ENCODE measurements at regions of chr15 and their contacts with region 1.

Region 1: GRCh38 chr15:74615508-74616365 is at the start of gene CLK3:
- DNase-seq: peak; percentile 95
- H3K4me3 ChIP-seq: peak within 1 kb of the TSS; percentile 89 to 93 (median 91)
- H3K27ac ChIP-seq: peak within 1 kb of the TSS; percentile 86
- H3K4me1 ChIP-seq: peaks cover 36% of the 10 kb centered on the region
- H3K27me3 ChIP-seq: no peaks in the 10 kb centered on the region
- CTCF ChIP-seq: no peak
- total RNA-seq, gene CLK3: 52.7 to 58.7 TPM

Region 2: DNA sequence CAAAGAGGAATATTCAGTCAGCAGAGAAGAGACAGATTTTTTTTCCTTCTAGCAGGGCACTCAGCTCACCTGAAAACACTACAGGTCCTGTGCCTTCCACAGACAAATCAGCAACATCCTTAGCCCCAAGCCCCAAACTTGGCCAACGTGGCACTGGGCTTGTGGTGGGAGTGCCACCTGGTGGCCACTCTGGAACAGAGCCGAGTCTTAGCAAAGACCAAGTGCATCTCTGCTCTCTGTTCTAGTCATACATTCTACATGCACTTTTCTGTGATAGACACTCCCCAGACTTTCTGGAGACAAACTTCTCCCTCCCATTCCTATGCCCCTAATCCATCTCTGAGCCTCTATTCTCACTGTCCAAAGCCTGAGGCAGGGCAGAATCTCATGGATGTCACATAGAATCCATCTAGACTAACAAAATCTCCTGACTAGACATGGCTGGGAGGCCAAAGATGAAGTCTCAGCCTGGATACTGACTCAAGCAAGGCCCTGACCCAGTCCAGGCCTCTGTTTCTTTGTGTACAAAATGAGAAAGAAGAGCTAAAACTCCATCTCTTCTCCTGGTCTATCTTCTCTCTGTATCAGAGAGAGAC is 176.9 kb before region 1 on chr15:
- CTCF ChIA-PET with region 1: interaction called, 3 read pairs
- dilution Hi-C with region 1: no loop called
- in situ Hi-C with region 1: no loop called
- intact Hi-C with region 1: loop called (anchors 2 kb)
- DNase-seq: peak; percentile 73
- H3K4me3 ChIP-seq: no peak overlapping the region
- H3K27ac ChIP-seq: no peak overlapping the region
- H3K4me1 ChIP-seq: peaks cover 4% of the 10 kb centered on the region
- H3K27me3 ChIP-seq: no peaks in the 10 kb centered on the region
- CTCF ChIP-seq: peak; percentile 97 to 98

Region 3: GRCh38 chr15:74460871-74461846 is 154.6 kb before region 1 on chr15 and contains the start of gene UBL7:
- CTCF ChIA-PET with region 1: no interaction called
- dilution Hi-C with region 1: no loop called
- in situ Hi-C with region 1: no loop called
- intact Hi-C with region 1: loop called (anchors 1 kb)
- DNase-seq: peak; percentile 97
- H3K4me3 ChIP-seq: peak within 1 kb of the TSS; percentile 63 to 96 (median 94)
- H3K27ac ChIP-seq: peak within 1 kb of the TSS; percentile 82
- H3K4me1 ChIP-seq: peaks cover 13% of the 10 kb centered on the region
- H3K27me3 ChIP-seq: no peaks in the 10 kb centered on the region
- CTCF ChIP-seq: peak in 1 of 2 donors; percentile 39
- total RNA-seq, gene UBL7: 36.4 to 41.7 TPM

Region 4: DNA sequence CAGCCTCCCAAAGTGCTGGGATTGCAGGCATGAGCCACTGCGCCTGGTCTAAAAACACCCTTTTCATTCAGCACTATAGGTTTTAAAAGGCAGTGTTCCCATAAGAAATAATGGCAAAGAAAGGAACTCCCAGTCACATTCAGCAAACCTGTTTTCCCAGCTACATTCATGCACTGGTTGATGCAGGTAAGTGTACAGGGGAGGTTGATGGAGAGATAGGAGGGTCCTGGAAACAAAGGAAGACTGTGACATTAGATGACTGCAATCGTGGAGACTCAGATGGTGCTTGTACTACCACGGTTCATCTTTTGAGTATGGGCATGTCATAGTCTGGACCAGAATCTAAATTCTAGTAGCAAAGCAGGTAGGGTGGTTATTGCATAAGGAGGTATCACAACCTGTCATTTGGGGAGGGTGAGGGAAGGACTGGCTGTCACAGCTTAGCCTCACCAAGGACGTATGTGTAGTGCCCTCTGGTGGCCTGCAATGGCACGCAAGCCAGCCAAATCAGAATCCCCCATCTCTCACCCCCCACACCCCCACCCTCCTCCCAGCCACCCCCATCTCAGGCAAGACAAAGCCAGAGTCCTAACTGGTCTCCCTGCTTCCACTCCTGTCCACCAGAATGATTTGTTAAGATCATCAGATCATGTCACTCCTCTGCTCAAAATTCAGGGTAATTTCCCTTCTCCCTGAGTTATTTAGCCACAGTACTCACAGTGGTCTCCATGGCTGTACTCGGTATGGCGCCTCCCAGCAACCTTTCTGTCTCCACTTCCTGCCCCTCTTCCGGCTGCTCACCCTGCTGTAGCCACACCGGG is 126.0 kb before region 1 on chr15:
- CTCF ChIA-PET with region 1: no interaction called
- dilution Hi-C with region 1: no loop called
- in situ Hi-C with region 1: no loop called
- intact Hi-C with region 1: loop called (anchors 1 kb)
- DNase-seq: peak; percentile 20
- H3K4me3 ChIP-seq: no peak overlapping the region
- H3K27ac ChIP-seq: no peak overlapping the region
- H3K4me1 ChIP-seq: no peaks in the 10 kb centered on the region
- H3K27me3 ChIP-seq: no peaks in the 10 kb centered on the region
- CTCF ChIP-seq: peak; percentile 50 to 72

Region 5: DNA sequence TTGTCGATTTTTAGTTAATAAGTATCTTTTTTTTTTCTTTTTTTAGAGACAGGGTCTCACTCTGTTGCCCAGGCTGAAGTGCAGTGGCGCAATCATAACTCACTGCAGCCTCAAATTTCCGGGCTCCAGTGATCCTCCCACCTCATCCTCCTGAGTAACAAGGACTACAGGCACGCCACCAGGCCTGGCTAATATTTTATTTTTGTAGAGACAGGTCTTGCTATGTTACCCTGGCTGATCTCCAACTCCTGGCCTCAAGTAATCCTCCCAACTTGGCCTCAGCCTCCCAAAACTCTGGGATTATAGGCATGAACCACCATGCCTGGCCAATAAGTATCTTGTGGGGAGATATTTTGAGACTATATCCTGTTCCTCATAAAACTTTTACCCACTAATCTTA is 104.2 kb before region 1 on chr15:
- CTCF ChIA-PET with region 1: no interaction called
- dilution Hi-C with region 1: no loop called
- in situ Hi-C with region 1: no loop called
- intact Hi-C with region 1: no loop called
- DNase-seq: no peak
- H3K4me3 ChIP-seq: no peak overlapping the region
- H3K27ac ChIP-seq: no peak overlapping the region
- H3K4me1 ChIP-seq: no peaks in the 10 kb centered on the region
- H3K27me3 ChIP-seq: no peaks in the 10 kb centered on the region
- CTCF ChIP-seq: no peak

Region 6: GRCh38 chr15:74540761-74541493 is 74.8 kb before region 1 on chr15 and contains the start of gene ARID3B:
- CTCF ChIA-PET with region 1: interaction called, 24 read pairs
- dilution Hi-C with region 1: no loop called
- in situ Hi-C with region 1: loop called in 1 of 2 experiments (anchors 5 kb)
- intact Hi-C with region 1: loop called (anchors 1 kb)
- DNase-seq: peak; percentile 96
- H3K4me3 ChIP-seq: peak within 1 kb of the TSS; percentile 86 to 95 (median 95)
- H3K27ac ChIP-seq: peak within 1 kb of the TSS; percentile 90
- H3K4me1 ChIP-seq: peaks cover 39% of the 10 kb centered on the region
- H3K27me3 ChIP-seq: no peaks in the 10 kb centered on the region
- CTCF ChIP-seq: no peak
- total RNA-seq, gene ARID3B: 7.0 to 12.8 TPM

Region 7: GRCh38 chr15:74565381-74566085 is 50.2 kb before region 1 on chr15:
- CTCF ChIA-PET with region 1: interaction called, 11 read pairs
- dilution Hi-C with region 1: no loop called
- in situ Hi-C with region 1: no loop called
- intact Hi-C with region 1: no loop called
- DNase-seq: no peak
- H3K4me3 ChIP-seq: no peak overlapping the region
- H3K27ac ChIP-seq: no peak overlapping the region
- H3K4me1 ChIP-seq: no peaks in the 10 kb centered on the region
- H3K27me3 ChIP-seq: no peaks in the 10 kb centered on the region
- CTCF ChIP-seq: no peak

Region 8: DNA sequence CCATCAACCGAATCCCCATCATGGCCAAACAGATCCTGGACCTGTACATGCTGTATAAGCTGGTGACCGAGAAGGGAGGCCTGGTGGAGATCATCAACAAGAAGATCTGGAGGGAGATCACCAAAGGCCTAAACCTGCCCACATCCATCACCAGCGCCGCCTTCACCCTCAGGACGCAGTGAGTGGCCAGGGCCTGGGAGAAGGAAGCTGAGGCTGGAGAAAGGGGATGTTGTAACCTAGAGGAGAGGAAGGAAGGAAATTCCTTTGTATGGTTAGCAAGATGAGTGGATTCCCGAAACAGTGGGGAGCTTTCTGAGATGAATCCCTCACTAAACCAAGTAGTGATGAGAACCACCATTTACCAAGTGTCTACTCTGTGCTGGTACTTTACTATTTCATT is 25.9 kb before region 1 on chr15:
- CTCF ChIA-PET with region 1: no interaction called
- dilution Hi-C with region 1: no loop called
- in situ Hi-C with region 1: no loop called
- intact Hi-C with region 1: loop called (anchors 2 kb)
- DNase-seq: no peak
- H3K4me3 ChIP-seq: no peak overlapping the region
- H3K27ac ChIP-seq: peak overlapping the region; percentile 60
- H3K4me1 ChIP-seq: peaks cover 18% of the 10 kb centered on the region
- H3K27me3 ChIP-seq: no peaks in the 10 kb centered on the region
- CTCF ChIP-seq: no peak

Measured in mammary epithelial cell (primary cell).